HEK293 (cell line): ENCODE measurements at regions of chr1 and their contacts with region 1.

Region 1: GRCh38 chr1:201408176-201408833 is 9.2 kb upstream of the LAD1 start:
- H3K4me3 ChIP-seq: no peak overlapping the region
- H3K27ac ChIP-seq: no peak overlapping the region
- H3K4me1 ChIP-seq: no peaks in the 10 kb centered on the region
- CTCF ChIP-seq: peak; percentile 89

Region 2: DNA sequence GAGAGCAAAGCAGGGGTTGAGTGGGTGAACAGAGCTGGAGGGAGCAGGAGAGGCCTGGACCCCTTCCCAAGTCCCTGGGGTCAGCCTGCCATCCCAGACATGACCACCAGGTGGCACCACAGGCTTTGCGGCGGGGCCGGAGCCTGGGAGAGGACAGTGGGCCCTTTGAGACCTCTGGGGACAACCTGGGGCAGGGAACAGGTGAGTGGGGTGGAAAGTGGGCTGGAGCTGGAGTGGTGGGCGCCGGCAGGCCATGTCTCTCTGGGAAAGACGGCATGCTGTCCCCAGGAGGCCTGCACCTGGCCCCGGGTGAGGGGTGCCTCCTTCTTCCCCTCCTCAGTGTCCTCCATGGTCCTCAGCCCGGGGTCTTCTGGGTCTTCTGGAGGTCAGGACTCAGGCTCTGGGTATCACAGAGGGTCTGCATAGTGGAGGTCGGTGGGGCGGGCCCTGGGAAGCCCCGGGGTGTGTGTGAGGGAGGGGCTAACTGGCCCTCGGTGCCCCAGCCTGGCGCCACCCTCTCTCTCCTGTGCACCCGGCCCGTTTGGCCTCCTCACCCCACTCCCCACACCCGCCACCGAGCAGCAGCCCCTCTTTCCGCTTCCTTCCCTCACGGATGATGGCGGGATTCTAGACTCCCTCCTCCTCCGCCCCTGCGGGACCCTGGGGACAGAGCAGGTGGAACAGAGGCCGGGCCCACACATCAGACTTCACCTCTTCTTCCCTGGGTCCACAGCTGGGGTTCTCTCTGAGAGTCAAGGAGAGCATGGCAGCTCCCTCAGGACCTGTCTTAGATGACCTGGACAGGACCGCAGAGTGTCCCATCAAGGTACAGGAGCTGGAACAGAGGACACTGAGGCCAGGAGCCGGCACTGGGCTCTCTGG is 153.4 kb before region 1 on chr1:
- CTCF ChIA-PET with region 1: interaction called, 10 read pairs
- POLR2A ChIA-PET with region 1: no interaction called
- H3K4me3 ChIP-seq: no peak overlapping the region
- H3K27ac ChIP-seq: no peak overlapping the region
- H3K4me1 ChIP-seq: no peaks in the 10 kb centered on the region
- CTCF ChIP-seq: peak; percentile 91

Region 3: DNA sequence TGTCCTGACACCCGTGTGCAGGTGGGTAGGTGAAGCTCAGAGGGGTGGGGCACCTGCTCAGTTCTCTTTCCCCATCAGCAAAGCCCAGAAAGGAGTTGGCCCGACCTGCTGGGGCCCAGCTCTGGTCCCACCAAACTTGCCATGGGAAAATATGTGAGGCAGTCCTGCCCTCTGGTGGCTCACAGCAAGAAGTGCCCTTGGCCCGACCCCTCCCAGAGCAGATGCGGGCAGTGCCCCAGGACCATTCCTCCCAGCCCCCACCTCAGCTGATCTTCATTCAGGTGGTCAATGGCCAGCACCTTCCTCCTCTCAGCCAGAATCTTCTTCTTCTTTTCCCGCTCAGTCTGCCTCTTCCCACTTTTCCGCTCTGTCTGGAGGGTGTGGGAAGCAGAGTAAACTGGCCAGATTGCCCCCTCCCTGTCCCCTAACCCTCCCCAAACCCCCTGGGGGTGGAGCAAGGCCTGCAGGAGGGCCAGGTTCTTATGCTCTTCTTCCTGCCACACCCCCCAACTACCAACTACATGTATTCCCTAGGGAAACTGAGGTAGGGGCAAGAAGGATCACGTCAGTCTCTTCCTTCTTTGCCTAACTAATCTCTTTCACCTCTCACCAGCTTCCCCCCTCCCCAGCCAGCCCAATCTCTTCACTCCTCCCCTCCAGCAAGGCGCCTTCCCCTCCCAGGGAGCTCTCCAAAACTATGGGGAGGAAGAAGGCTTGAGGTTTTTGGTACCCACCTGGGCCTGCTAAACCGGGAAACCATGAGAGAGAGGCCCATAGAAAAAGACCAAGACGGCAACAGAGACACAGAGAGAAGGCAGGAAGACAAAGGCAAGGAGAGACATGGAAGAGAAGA is 46.4 kb before region 1 on chr1:
- CTCF ChIA-PET with region 1: interaction called, 13 read pairs
- POLR2A ChIA-PET with region 1: no interaction called
- H3K4me3 ChIP-seq: no peak overlapping the region
- H3K27ac ChIP-seq: no peak overlapping the region
- H3K4me1 ChIP-seq: no peaks in the 10 kb centered on the region
- CTCF ChIP-seq: peak; percentile 82

Region 4: GRCh38 chr1:201385299-201385891 is 22.9 kb before region 1 on chr1:
- CTCF ChIA-PET with region 1: interaction called, 29 read pairs
- POLR2A ChIA-PET with region 1: interaction called, 3 read pairs
- H3K4me3 ChIP-seq: no peak overlapping the region
- H3K27ac ChIP-seq: no peak overlapping the region
- H3K4me1 ChIP-seq: no peaks in the 10 kb centered on the region
- CTCF ChIP-seq: peak; percentile 76

Region 5: DNA sequence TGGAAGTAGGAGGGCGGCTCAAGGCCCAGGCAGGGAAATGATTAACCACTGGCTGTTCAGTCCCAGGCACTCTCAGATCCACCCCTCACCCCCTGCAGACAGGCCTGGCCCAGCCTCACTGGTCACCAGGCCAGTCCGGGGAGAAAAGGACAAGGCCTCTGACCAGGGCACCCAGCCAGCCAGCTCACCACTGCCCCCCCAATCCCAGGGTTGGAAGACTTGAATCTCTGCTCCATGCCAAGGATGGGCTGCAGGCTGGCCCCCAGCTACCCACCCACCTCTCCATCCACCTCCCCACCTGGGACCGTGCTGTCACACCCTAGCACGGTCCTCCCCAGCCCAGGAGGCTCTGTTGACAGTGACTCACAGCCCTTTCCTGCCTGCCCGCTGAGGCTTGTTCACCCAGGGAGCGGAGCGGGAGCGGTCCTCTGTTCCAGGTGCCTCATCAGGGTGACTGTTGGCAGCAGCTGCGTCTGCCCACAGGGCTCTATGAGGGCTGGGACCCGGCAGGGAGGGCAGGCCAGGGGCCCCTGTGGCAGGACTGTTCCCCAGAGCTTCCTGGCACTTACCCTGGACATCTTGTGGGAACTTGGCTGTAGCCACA is 11.3 kb before region 1 on chr1:
- CTCF ChIA-PET with region 1: interaction called, 13 read pairs
- POLR2A ChIA-PET with region 1: no interaction called
- H3K4me3 ChIP-seq: no peak overlapping the region
- H3K27ac ChIP-seq: no peak overlapping the region
- H3K4me1 ChIP-seq: no peaks in the 10 kb centered on the region
- CTCF ChIP-seq: no peak

Region 6: DNA sequence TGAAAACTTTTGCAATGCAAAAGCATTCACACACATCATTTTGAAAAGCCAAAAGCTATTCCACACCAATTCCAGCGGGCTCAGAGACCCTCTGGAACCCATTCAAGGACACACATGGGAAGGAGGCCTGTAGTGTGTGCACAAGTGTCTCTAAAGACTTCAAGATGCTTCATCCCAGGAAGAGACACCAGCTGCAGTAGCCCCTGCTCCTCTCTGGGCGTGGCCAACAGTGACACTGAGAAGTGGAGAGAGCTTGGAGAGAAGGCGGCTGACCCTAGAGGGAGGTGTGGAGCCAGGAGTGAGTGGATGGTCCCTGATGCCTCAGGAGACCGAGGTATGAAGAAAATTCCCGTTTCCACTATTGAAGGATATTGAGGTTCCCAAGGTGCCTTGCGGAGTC is 28.1 kb after region 1 on chr1:
- CTCF ChIA-PET with region 1: interaction called, 12 read pairs
- POLR2A ChIA-PET with region 1: no interaction called
- H3K4me3 ChIP-seq: no peak overlapping the region
- H3K27ac ChIP-seq: no peak overlapping the region
- H3K4me1 ChIP-seq: 0 out of 2 replicates have a peak, but pooled peaks cover 2% of the 10 kb centered on the region
- CTCF ChIP-seq: peak; percentile 56; the same call in 1 of the 2 replicates